ENCODE measurements at regions of chr13 and their contacts with region 1.

Region 1: GRCh38 chr13:24220086-24220703 is 59.7 kb downstream of the SPATA13 start:
- DNase-seq: peak; percentile 55
- H3K4me3 Mint-ChIP-seq: no peak overlapping the region
- H3K27ac Mint-ChIP-seq: no peak overlapping the region
- H3K4me1 Mint-ChIP-seq: peaks cover 64% of the 10 kb centered on the region
- H3K27me3 Mint-ChIP-seq: no peaks in the 10 kb centered on the region

Region 2: DNA sequence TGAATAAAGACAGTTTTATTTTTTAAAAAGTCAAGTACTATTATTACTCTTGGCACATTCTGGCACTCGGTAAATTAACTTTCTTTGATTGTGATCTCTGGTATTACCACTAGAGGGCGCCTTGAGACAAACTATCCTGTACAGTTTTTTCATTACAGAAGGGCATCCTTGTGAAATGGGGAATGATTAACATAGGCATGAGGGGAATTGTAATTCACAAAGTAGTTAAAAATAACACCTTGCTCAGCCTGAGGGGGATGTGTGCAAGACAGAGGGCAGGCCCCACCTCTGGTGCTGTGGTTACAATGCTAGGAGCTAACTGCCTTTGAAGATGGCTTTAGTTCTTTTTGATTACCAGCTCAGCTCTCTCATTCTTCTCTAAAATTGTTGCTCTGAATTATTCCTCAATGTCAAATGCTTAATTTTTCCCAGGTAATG is 298.7 kb before region 1 on chr13:
- intact Hi-C with region 1: loop called (anchors 1 kb)
- DNase-seq: peak; percentile 24
- H3K4me3 Mint-ChIP-seq: no peak overlapping the region
- H3K27ac Mint-ChIP-seq: no peak overlapping the region
- H3K4me1 Mint-ChIP-seq: peaks cover 9% of the 10 kb centered on the region
- H3K27me3 Mint-ChIP-seq: peaks cover 39% of the 10 kb centered on the region

Region 3: GRCh38 chr13:24038841-24039330 is 181.3 kb before region 1 on chr13:
- intact Hi-C with region 1: loop called (anchors 1 kb)
- DNase-seq: no peak
- H3K4me3 Mint-ChIP-seq: peak overlapping the region; percentile 30
- H3K27ac Mint-ChIP-seq: peak overlapping the region; percentile 51
- H3K4me1 Mint-ChIP-seq: peaks cover 44% of the 10 kb centered on the region
- H3K27me3 Mint-ChIP-seq: peaks cover 3% of the 10 kb centered on the region

Region 4: GRCh38 chr13:24085461-24086061 is 134.6 kb before region 1 on chr13:
- intact Hi-C with region 1: loop called (anchors 1 kb)
- DNase-seq: no peak
- H3K4me3 Mint-ChIP-seq: no peak overlapping the region
- H3K27ac Mint-ChIP-seq: no peak overlapping the region
- H3K4me1 Mint-ChIP-seq: peaks cover 5% of the 10 kb centered on the region
- H3K27me3 Mint-ChIP-seq: peaks cover 18% of the 10 kb centered on the region

Region 5: GRCh38 chr13:24168392-24168750 is 51.8 kb before region 1 on chr13:
- intact Hi-C with region 1: loop called (anchors 2 kb)
- DNase-seq: no peak
- H3K4me3 Mint-ChIP-seq: no peak overlapping the region
- H3K27ac Mint-ChIP-seq: peak overlapping the region; percentile 77
- H3K4me1 Mint-ChIP-seq: peaks cover 55% of the 10 kb centered on the region
- H3K27me3 Mint-ChIP-seq: peaks cover 4% of the 10 kb centered on the region

Region 6: DNA sequence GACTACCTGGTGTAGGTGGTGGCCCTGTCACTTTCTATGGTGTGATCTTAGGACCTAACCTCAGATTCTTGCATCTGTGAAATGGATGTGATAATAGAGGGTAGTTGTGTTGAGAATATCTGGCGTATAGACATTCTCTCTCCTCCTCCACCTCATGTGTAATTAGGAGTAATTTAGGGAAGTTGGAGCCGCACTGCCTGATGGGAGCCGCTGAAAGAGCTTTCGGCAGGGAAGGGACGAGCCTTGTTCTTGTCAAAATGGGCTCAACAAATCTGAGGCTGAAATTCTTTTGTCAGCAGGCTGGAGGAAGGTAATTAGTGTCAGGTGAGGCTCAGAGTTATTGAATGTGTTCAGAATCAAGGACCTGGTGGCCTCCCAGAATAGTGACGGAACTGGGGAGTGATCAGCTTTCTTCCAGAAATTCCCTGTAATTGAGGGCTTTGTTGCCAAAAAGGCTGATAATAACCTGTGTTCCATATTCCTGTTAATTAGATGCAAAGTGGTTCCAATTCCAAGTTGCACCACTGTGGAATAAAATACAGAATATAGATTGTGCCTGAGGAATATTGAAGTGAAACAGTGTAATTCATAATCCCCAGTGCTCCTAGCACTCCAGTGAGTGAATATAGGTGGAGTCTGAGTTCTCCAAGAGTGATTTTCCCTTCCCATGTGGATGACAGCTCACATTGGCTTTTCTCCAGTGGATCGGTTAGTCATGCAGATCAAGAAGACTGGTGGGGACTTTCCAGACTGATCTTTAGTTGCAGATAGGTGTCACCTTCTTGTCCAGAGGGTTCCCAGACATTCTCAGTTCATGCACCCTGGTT is 12.1 kb before region 1 on chr13:
- intact Hi-C with region 1: no loop called
- DNase-seq: no peak
- H3K4me3 Mint-ChIP-seq: no peak overlapping the region
- H3K27ac Mint-ChIP-seq: no peak overlapping the region
- H3K4me1 Mint-ChIP-seq: peaks cover 38% of the 10 kb centered on the region
- H3K27me3 Mint-ChIP-seq: no peaks in the 10 kb centered on the region

Measured in activated T-helper 1 cell treated with anti-CD3 and anti-CD28 coated beads, Interleukin-12 subunit alpha, Interleukin-12 subunit beta, Interleukin-2, Interleukin-4 antibody, amounts not matched to agents 30 ng/mL and 10 ng/mL and 1 ng/mL, durations not matched to agents 14 hours and 24 hours and 36 hours (primary cell).